Activated naive CD4-positive, alpha-beta T cell treated with anti-CD3 and anti-CD28 coated beads for 36 hours (primary cell): ENCODE measurements at regions of chr6 and their contacts with region 1.

Region 1: DNA sequence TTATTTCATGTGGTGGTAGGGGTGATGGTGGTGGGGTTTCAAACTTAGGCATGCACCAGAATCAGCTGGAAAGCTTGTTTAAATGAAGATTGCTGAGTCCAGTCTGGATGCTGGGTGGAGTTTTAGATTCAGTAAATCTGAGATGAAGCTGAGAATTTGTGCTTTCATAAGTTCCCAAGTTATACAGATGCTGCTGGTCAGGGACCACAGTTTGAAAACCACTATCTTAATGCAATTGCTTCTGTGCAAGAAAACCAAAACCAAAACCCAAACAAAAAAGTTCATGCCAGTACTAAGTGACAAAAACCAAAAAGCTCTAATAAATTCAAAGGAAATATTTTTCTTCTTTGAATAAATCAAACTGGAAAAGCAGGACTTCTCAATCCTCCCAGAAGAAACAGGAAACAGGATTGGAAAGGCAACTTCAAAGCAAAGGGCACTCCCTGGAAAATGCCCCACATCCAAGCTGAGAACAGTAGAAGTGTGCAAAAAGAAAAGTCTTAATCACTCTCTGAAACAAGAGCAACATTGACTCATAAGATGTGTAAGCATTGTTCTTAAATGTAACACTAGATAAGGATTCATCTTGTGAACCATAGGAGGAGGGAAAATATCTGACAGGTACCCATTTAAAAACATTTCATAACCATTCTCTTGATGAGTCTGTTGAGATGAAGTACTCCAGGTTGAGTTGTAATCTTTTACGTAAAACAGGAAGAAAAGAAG is 481.5 kb upstream of the HSF2 start:
- DNase-seq: no peak
- H3K4me3 Mint-ChIP-seq: no peak overlapping the region
- H3K27ac Mint-ChIP-seq: no peak overlapping the region
- H3K4me1 Mint-ChIP-seq: no peaks in the 10 kb centered on the region
- H3K27me3 Mint-ChIP-seq: no peaks in the 10 kb centered on the region

Region 2: GRCh38 chr6:121944354-121944753 is 26.4 kb after region 1 on chr6:
- CTCF ChIA-PET with region 1: no interaction called
- intact Hi-C with region 1: no loop called
- DNase-seq: no peak
- H3K4me3 Mint-ChIP-seq: no peak overlapping the region
- H3K27ac Mint-ChIP-seq: no peak overlapping the region
- H3K4me1 Mint-ChIP-seq: no peaks in the 10 kb centered on the region
- H3K27me3 Mint-ChIP-seq: no peaks in the 10 kb centered on the region

Region 3: GRCh38 chr6:122165014-122165413 is 247.0 kb after region 1 on chr6:
- CTCF ChIA-PET with region 1: no interaction called
- intact Hi-C with region 1: no loop called
- DNase-seq: no peak
- H3K4me3 Mint-ChIP-seq: no peak overlapping the region
- H3K27ac Mint-ChIP-seq: no peak overlapping the region
- H3K4me1 Mint-ChIP-seq: no peaks in the 10 kb centered on the region
- H3K27me3 Mint-ChIP-seq: no peaks in the 10 kb centered on the region

Region 4: GRCh38 chr6:123352279-123352678 is 1434.3 kb after region 1 on chr6:
- CTCF ChIA-PET with region 1: no interaction called
- intact Hi-C with region 1: loop called (anchors 10 kb)
- DNase-seq: no peak
- H3K4me3 Mint-ChIP-seq: no peak overlapping the region
- H3K27ac Mint-ChIP-seq: no peak overlapping the region
- H3K4me1 Mint-ChIP-seq: no peaks in the 10 kb centered on the region
- H3K27me3 Mint-ChIP-seq: no peaks in the 10 kb centered on the region